ENCODE measurements at regions of chr9 and their contacts with region 1.

Region 1: DNA sequence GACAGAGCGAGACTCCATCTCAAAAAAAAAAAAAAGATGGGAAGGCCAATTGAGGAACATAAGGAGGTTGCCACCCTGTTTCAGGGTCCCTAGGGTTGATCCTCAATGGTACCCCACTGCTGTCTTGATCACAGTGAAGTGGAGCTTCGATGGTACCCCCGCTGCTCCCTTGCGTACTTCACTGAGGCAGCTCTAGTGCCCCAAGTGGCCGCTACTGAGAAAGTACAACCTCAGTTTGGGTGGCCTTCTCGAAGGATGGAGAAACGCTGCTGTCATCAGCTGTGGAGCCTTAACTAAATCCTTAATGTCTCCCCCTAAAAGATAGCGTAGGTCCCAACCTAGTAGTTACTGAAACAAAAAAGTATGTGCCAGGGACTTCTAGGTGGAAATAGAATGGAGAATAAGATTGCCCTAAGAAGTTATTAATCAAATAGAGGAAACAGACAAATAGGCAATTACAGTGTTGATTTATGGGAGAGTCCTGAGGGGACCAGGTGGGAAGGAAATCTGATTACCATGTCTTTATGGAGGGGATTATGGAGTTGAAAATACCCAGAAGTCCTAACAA is 6.3 kb downstream of the TESK1 start:
- DNase-seq: peak; percentile 18 to 80 (median 64)
- ATAC-seq: peak; percentile 99
- H3K4me3 ChIP-seq: no peak overlapping the region
- H3K4me3 Mint-ChIP-seq: no peak overlapping the region
- H3K27ac ChIP-seq: no peak overlapping the region
- H3K27ac Mint-ChIP-seq: peak overlapping the region; percentile 25
- H3K4me1 ChIP-seq: peaks cover 18% of the 10 kb centered on the region
- H3K4me1 Mint-ChIP-seq: peaks cover 16% of the 10 kb centered on the region
- H3K27me3 ChIP-seq: no peaks in the 10 kb centered on the region
- H3K27me3 Mint-ChIP-seq: no peaks in the 10 kb centered on the region
- CTCF ChIP-seq: peak; percentile 64

Region 2: GRCh38 chr9:35179347-35180287 is 431.7 kb before region 1 on chr9:
- CTCF ChIA-PET with region 1: no interaction called
- POLR2A ChIA-PET with region 1: no interaction called
- intact Hi-C with region 1: no loop called
- DNase-seq: no peak
- ATAC-seq: no peak
- H3K4me3 ChIP-seq: no peak overlapping the region
- H3K4me3 Mint-ChIP-seq: no peak overlapping the region
- H3K27ac ChIP-seq: no peak overlapping the region
- H3K27ac Mint-ChIP-seq: no peak overlapping the region
- H3K4me1 ChIP-seq: no peaks in the 10 kb centered on the region
- H3K4me1 Mint-ChIP-seq: no peaks in the 10 kb centered on the region
- H3K27me3 ChIP-seq: no peaks in the 10 kb centered on the region
- H3K27me3 Mint-ChIP-seq: peaks cover 10% of the 10 kb centered on the region
- CTCF ChIP-seq: no peak

Region 3: GRCh38 chr9:35639631-35640030 is 28.3 kb after region 1 on chr9:
- CTCF ChIA-PET with region 1: interaction called, 32 read pairs
- POLR2A ChIA-PET with region 1: interaction called, 12 read pairs
- intact Hi-C with region 1: loop called in 1 of 2 experiments (anchors 2 kb)
- DNase-seq: no peak
- ATAC-seq: no peak
- H3K4me3 ChIP-seq: no peak overlapping the region
- H3K4me3 Mint-ChIP-seq: no peak overlapping the region
- H3K27ac ChIP-seq: peak overlapping the region in 1 of 2 experiments; percentile 56
- H3K27ac Mint-ChIP-seq: peak overlapping the region; percentile 79
- H3K4me1 ChIP-seq: peaks cover 36% of the 10 kb centered on the region
- H3K4me1 Mint-ChIP-seq: peaks cover 64% of the 10 kb centered on the region
- H3K27me3 ChIP-seq: no peaks in the 10 kb centered on the region
- H3K27me3 Mint-ChIP-seq: no peaks in the 10 kb centered on the region
- CTCF ChIP-seq: no peak

Region 4: DNA sequence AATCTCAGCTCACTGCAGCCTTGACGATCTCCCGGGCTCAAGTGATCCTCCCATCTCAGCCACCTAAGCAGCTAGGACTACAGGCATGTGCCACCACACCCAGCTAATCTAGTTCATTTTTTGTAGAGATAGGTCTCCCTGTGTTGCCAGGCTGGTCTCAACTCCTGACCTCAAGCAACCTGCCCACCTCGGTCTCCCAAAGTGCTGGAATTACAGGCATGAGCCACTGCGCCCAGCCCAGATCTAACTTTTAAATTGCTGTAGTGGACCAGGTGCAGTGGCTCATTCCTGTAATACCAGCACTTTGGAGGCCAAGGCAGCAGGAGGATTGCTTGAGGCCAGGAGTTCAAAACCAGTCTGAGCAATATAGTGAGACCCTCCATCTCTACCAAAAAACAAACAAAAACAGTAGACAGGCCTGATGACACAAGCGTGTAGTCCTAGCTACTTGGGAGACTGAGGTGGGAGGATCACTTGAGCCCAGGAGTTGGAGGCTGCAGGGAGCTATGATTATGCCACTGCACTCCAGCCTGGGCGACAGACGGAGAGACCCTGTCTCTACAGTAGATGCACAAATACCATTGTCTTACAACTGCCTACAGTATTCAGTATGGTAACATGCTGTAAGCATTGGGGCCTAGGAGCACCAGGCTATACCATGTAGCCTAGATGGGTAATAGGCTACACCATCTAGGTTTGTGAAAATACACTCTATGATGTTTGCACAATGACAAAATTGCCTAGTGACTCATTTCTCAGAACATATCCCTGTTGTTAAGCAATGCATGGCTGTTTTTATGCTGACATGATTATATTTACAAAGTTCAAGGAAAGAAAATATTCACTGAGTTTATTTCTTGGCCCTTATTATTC is 40.9 kb after region 1 on chr9:
- CTCF ChIA-PET with region 1: interaction called, 46 read pairs
- POLR2A ChIA-PET with region 1: interaction called, 79 read pairs
- intact Hi-C with region 1: no loop called
- DNase-seq: no peak
- ATAC-seq: no peak
- H3K4me3 ChIP-seq: no peak overlapping the region
- H3K4me3 Mint-ChIP-seq: peak overlapping the region; percentile 29
- H3K27ac ChIP-seq: peak overlapping the region in 1 of 2 experiments; percentile 78
- H3K27ac Mint-ChIP-seq: peak overlapping the region; percentile 73
- H3K4me1 ChIP-seq: peaks cover 45% of the 10 kb centered on the region
- H3K4me1 Mint-ChIP-seq: peaks cover 69% of the 10 kb centered on the region
- H3K27me3 ChIP-seq: no peaks in the 10 kb centered on the region
- H3K27me3 Mint-ChIP-seq: no peaks in the 10 kb centered on the region
- CTCF ChIP-seq: no peak

Region 5: DNA sequence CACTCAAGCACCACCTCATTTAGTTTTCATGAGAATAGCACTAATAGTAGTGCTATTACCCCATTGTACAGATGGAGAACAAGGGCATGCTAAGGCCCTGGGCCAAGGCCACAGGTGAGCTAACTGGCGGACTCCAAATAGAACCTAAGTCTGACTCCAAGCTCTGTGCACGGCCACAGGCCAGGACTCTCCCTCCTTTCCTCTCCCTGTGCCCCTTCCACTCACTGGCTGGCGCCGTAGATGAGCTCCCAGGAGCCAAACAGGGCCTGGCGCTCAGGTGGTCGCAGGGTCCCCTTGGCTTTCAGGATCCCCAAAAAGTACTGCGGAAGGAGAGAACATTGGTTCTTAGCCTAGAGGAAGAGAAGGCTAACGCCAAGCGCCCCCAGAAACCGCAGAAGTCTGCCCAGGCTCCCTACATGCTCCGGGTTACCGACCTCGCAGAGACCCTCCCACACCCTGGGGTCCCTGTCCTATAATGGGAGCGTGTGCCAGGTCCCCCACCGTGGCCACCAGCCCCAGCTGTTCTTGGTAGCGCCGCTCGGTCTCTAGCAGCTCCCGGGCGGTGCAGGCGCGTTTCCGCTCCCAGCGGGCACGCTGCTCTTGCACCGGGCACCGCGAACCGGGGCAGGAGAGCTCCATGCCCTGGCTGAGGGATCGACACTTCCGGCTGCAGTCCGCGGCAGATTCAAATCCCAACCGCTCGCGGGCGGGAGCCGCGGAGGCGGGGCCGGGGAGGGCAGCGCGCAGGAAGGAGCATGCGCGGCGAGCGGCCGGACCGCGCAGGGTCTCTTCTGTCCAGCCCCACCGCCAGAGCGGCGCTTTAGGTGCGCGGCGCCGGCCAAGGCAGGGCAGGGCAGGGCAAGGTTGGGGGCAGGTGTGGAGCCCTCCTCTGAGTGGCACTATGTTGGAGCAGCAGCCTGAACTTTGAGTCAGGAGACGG is 53.5 kb after region 1 on chr9 and contains the start of gene ARHGEF39:
- CTCF ChIA-PET with region 1: interaction called, 17 read pairs
- POLR2A ChIA-PET with region 1: no interaction called
- intact Hi-C with region 1: no loop called
- DNase-seq: peak in 8 of 9 experiments; percentile 54 to 83 (median 62)
- ATAC-seq: peak; percentile 69
- H3K4me3 ChIP-seq: peak within 1 kb of the TSS; percentile 60 to 77
- H3K4me3 Mint-ChIP-seq: peak within 1 kb of the TSS; percentile 82
- H3K27ac ChIP-seq: peak within 1 kb of the TSS in 1 of 2 experiments; percentile 71
- H3K27ac Mint-ChIP-seq: peak within 1 kb of the TSS; percentile 82
- H3K4me1 ChIP-seq: peaks cover 43% of the 10 kb centered on the region
- H3K4me1 Mint-ChIP-seq: peaks cover 53% of the 10 kb centered on the region
- H3K27me3 ChIP-seq: no peaks in the 10 kb centered on the region
- H3K27me3 Mint-ChIP-seq: no peaks in the 10 kb centered on the region
- CTCF ChIP-seq: no peak
- total RNA-seq, gene ARHGEF39: 0.25 to 0.35 TPM

Measured in CD8-positive, alpha-beta T cell (primary cell).